Activated naive CD8-positive, alpha-beta T cell treated with anti-CD3 and anti-CD28 coated beads, Interleukin-2, amount 10 ng/mL, durations not matched to agents 7 days and 5 days (primary cell): ENCODE measurements at regions of chr2 and their contacts with region 1.

Region 1: DNA sequence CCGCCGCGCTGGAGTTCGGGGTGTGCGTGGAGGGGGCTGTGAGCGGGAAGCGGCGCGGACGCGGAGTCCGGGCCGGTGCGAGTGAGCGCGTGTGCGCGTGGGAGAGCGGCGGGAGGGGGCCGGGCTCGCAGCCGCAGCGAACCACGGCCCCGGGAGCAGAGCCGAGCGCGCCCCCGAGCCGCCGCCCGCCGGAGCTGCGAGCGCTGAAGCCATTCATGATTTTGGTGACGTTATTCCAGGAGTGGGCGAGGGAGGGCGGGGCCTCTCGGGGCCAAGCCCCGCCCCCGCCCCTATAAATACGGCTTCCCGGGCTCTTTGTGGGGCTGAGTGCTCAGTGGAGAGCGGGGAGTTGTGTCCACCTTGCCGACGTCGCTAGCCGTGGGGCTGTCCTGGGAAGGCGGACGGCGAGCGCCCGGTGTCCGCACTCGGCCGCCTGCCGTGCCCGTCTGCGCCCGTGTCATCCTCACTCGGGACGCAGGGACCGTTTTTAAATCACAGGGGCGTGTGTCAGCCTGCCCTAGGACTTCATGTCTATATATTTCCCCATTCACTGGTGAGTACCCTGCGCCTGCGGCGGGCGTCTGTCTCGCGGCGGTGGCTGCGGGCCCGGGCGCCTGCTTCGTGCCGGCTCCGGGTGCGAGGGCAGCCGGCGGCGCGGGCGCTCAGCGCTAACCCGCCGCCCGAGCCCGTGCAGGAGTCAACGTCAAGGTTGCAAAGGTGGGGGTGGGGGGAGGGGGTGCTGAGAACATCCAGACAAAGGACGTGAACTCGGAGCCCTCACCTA is at the start of gene LBH:
- DNase-seq: peak; percentile 86
- ATAC-seq: peak; percentile 35
- H3K4me3 Mint-ChIP-seq: peak within 1 kb of the TSS; percentile 90
- H3K27ac Mint-ChIP-seq: peak within 1 kb of the TSS; percentile 92
- H3K4me1 Mint-ChIP-seq: peaks cover 42% of the 10 kb centered on the region
- H3K27me3 Mint-ChIP-seq: peaks cover 2% of the 10 kb centered on the region
- total RNA-seq, gene LBH: 169 to 186 TPM

Region 2: DNA sequence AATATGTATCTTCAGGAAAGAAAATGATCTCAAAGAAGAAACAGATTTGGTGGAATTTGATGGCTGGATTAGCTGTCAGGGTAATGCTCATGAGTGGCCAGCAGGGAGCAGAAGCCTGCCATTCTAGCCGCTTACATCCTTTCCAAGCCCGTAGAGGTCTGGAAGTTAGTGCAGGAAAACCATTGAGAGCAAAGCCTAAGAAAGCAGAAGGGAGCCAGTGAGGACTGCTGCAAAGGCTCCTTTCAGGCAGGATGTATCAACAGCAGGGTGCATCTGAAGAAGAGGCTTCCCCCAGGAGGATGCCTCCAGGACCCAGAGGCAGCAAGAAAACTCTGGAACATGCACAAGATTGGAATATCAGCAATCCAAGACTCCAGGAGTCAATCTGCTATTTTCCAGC is 23.0 kb before region 1 on chr2:
- POLR2A ChIA-PET with region 1: interaction called, 28 read pairs
- DNase-seq: peak; percentile 40
- ATAC-seq: peak; percentile 31
- H3K4me3 Mint-ChIP-seq: peak overlapping the region; percentile 12
- H3K27ac Mint-ChIP-seq: no peak overlapping the region
- H3K4me1 Mint-ChIP-seq: peaks cover 15% of the 10 kb centered on the region
- H3K27me3 Mint-ChIP-seq: peaks cover 2% of the 10 kb centered on the region

Region 3: GRCh38 chr2:30266051-30266621 is 34.7 kb after region 1 on chr2:
- POLR2A ChIA-PET with region 1: interaction called, 73 read pairs
- DNase-seq: peak; percentile 65
- ATAC-seq: peak; percentile 92
- H3K4me3 Mint-ChIP-seq: peak overlapping the region; percentile 81
- H3K27ac Mint-ChIP-seq: peak overlapping the region; percentile 97
- H3K4me1 Mint-ChIP-seq: peaks cover 38% of the 10 kb centered on the region
- H3K27me3 Mint-ChIP-seq: no peaks in the 10 kb centered on the region

Region 4: GRCh38 chr2:30421604-30422443 is 190.4 kb after region 1 on chr2:
- POLR2A ChIA-PET with region 1: interaction called, 10 read pairs
- DNase-seq: peak; percentile 39
- ATAC-seq: peak; percentile 38
- H3K4me3 Mint-ChIP-seq: peak overlapping the region; percentile 68
- H3K27ac Mint-ChIP-seq: peak overlapping the region; percentile 86
- H3K4me1 Mint-ChIP-seq: peaks cover 32% of the 10 kb centered on the region
- H3K27me3 Mint-ChIP-seq: no peaks in the 10 kb centered on the region